RWPE1 (cell line): ENCODE measurements at regions of chr15 and their contacts with region 1.

Region 1: DNA sequence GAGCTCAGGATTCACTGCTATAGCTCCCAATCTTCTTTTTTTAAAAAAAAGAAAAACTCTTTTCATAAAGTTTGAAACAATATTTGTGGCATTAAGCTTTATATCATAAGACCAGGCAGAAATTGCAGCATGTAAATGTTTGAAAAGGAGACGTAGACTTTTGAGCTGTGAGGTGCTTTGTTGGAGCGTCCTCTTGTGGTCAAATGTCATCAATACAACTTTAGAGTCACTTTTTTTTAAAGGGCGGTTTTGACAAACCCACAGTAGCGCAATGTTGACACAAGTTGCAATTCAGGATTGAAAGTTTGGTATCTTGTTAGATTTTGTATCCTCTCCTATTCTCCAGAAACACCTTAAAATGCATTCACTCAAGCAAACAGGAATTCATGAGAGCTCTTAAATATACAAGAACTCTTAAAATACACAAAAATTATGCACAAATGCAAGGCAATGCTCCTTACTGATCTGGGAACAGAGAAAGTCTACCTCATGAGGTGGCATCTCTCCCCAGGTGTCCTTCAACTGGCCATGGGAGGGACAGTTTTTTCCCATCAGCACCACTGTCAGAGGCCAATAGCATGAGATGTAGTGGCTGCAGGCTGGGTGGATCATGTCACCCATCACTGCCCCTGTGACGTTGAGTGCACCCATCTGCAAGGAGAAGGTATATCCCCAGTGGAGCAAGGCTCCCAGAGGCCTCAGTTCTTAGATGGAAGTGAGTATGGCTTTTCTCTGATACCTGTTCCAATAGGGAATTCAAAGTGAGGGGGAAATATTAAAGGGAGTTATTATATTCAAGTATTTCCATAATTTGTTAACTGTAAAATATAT is 70.7 kb downstream of the ANXA2 start:
- DNase-seq: peak; percentile 45
- H3K27ac ChIP-seq: no peak overlapping the region
- CTCF ChIP-seq: peak; percentile 97

Region 2: GRCh38 chr15:59689626-59690236 is 637.3 kb before region 1 on chr15:
- CTCF ChIA-PET with region 1: interaction called, 16 read pairs
- POLR2A ChIA-PET with region 1: interaction called, 3 read pairs
- DNase-seq: no peak
- H3K27ac ChIP-seq: peak overlapping the region; percentile 96
- CTCF ChIP-seq: no peak

Region 3: GRCh38 chr15:59725172-59725486 is 601.9 kb before region 1 on chr15:
- CTCF ChIA-PET with region 1: interaction called, 13 read pairs
- POLR2A ChIA-PET with region 1: no interaction called
- DNase-seq: no peak
- H3K27ac ChIP-seq: no peak overlapping the region
- CTCF ChIP-seq: peak; percentile 45; the same call in 1 of the 2 replicates

Region 4: GRCh38 chr15:59751552-59752413 is 575.3 kb before region 1 on chr15:
- CTCF ChIA-PET with region 1: interaction called, 14 read pairs
- POLR2A ChIA-PET with region 1: no interaction called
- DNase-seq: peak; percentile 33
- H3K27ac ChIP-seq: no peak overlapping the region
- CTCF ChIP-seq: peak; percentile 24

Region 5: DNA sequence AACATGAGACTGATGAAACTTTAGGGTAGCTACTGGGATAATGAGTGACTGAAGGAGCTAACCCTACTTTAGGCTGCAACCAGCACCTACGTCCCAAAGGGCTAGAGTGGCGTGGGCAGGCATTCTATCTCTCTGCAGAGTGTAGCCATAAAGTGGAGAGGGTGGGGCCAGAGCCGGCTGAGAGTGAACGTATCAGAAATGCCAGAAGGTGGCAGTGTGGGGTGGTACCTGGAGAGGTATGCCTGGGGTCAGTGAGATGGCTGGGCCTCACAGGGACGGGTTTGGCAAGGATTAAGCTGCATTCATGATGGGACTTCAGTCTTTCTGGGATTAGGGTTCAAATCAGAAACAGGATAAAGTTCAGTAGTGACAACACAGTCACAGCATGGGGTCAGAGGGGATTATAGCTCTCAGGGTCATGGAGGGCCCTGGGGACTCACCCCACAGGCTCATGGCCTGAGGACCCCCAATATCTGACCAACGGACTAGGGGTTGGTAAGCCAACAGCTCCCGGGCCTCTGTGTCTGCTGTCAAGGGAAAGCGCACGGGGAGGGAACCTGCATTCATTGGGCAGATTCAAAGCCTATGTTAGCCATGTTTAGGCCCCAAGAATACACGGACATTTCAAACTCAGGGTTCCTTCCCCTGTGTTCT is 409.4 kb before region 1 on chr15:
- CTCF ChIA-PET with region 1: interaction called, 11 read pairs
- POLR2A ChIA-PET with region 1: no interaction called
- DNase-seq: peak; percentile 70
- H3K27ac ChIP-seq: no peak overlapping the region
- CTCF ChIP-seq: peak; percentile 45

Region 6: GRCh38 chr15:60568301-60568742 is 241.3 kb after region 1 on chr15:
- CTCF ChIA-PET with region 1: no interaction called
- POLR2A ChIA-PET with region 1: no interaction called
- DNase-seq: no peak
- H3K27ac ChIP-seq: no peak overlapping the region
- CTCF ChIP-seq: no peak